ENCODE measurements at regions of chr4 and their contacts with region 1.

Region 1: GRCh38 chr4:173405840-173406606 is 7.1 kb upstream of the SCRG1 start:
- DNase-seq: no peak
- H3K4me3 ChIP-seq: no peak overlapping the region
- H3K27ac ChIP-seq: no peak overlapping the region
- H3K4me1 ChIP-seq: no peaks in the 10 kb centered on the region
- H3K27me3 ChIP-seq: no peaks in the 10 kb centered on the region
- CTCF ChIP-seq: no peak
- EP300 ChIP-seq: no peak
- POLR2A ChIP-seq: no peak

Region 2: GRCh38 chr4:172683021-172683420 is 723.0 kb before region 1 on chr4:
- in situ Hi-C with region 1: no loop called
- intact Hi-C with region 1: no loop called
- DNase-seq: no peak
- H3K4me3 ChIP-seq: no peak overlapping the region
- H3K27ac ChIP-seq: no peak overlapping the region
- H3K4me1 ChIP-seq: no peaks in the 10 kb centered on the region
- H3K27me3 ChIP-seq: no peaks in the 10 kb centered on the region
- CTCF ChIP-seq: no peak
- EP300 ChIP-seq: no peak
- POLR2A ChIP-seq: no peak

Region 3: DNA sequence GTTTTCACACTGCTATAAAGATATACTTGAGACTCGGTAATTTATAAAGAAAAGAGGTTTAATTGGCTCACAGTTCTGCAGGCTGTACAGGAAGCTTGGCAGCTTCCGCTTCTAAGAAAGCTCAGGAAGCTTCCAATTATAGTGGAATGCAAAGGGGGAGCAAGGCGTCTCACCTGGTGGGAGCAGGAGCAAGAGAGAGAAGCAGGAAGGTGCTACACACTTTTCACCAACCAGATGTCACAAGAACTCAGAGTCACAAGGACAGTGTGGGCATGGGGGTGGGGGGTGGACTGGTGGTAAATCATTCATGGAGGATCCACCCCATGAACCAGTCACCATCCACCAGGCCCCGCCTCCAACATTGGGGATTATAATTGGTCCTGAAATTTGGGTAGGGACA is 94.7 kb before region 1 on chr4:
- in situ Hi-C with region 1: loop called in 3 of 4 experiments (anchors 5 to 10 kb)
- intact Hi-C with region 1: no loop called
- DNase-seq: no peak
- H3K4me3 ChIP-seq: no peak overlapping the region
- H3K27ac ChIP-seq: no peak overlapping the region
- H3K4me1 ChIP-seq: no peaks in the 10 kb centered on the region
- H3K27me3 ChIP-seq: no peaks in the 10 kb centered on the region
- CTCF ChIP-seq: no peak
- EP300 ChIP-seq: no peak
- POLR2A ChIP-seq: no peak

Region 4: GRCh38 chr4:173318648-173319211 is 87.3 kb before region 1 on chr4:
- in situ Hi-C with region 1: loop called in 3 of 4 experiments (anchors 5 to 10 kb)
- intact Hi-C with region 1: loop called (anchors 5 kb)
- DNase-seq: no peak
- H3K4me3 ChIP-seq: no peak overlapping the region
- H3K27ac ChIP-seq: no peak overlapping the region
- H3K4me1 ChIP-seq: no peaks in the 10 kb centered on the region
- H3K27me3 ChIP-seq: no peaks in the 10 kb centered on the region
- CTCF ChIP-seq: peak in 4 of 5 experiments; percentile 35 to 49 (median 41)
- EP300 ChIP-seq: no peak
- POLR2A ChIP-seq: no peak

Region 5: DNA sequence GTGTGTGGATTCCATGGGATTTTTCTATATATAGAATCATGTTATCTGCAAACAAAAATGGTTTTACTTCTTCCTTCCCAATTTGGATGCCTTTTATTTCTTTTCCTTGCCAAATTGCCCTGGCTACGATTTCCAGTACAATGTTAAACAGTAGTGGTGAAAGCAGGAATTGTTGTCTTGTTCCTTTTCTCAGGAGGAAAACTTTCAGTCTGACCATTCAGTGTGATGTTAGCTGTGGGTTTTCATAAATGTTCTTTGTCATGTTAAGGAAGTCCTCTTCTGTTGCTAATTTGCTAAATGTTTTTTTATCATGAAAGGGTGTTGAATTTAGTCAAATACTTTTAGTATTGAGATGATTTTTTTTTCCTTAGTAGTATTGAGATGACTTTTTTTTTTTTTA is 24.4 kb before region 1 on chr4:
- in situ Hi-C with region 1: no loop called
- intact Hi-C with region 1: no loop called
- DNase-seq: no peak
- H3K4me3 ChIP-seq: no peak overlapping the region
- H3K27ac ChIP-seq: no peak overlapping the region
- H3K4me1 ChIP-seq: peaks cover 0 to 7% (median 0%) of the 10 kb centered on the region in 4 donors
- H3K27me3 ChIP-seq: no peaks in the 10 kb centered on the region
- CTCF ChIP-seq: no peak
- EP300 ChIP-seq: no peak
- POLR2A ChIP-seq: no peak

Region 6: DNA sequence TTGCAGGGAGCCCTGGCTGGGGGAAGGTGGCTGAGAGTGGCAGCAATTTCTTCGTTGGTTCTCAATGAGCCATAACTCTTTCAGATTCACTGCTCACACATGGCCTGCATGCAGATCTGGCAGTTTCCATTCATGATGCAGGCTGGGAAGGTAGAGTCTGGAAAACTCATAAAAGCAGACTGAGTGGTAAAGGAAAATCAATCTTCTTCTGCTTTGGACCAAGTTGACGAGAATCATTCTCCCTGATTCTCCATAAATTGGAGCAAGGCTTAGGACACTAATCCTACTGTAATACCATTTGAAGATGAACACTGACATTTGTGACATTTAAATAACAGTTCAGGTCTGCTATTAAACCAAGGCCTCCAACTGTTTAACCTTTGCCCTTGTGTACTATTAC is 159.3 kb after region 1 on chr4:
- in situ Hi-C with region 1: no loop called
- intact Hi-C with region 1: no loop called
- DNase-seq: no peak
- H3K4me3 ChIP-seq: no peak overlapping the region
- H3K27ac ChIP-seq: no peak overlapping the region
- H3K4me1 ChIP-seq: peaks cover 0 to 6% (median 2%) of the 10 kb centered on the region in 4 donors
- H3K27me3 ChIP-seq: no peaks in the 10 kb centered on the region
- CTCF ChIP-seq: no peak
- EP300 ChIP-seq: no peak
- POLR2A ChIP-seq: no peak